ENCODE measurements at regions of chr11 and their contacts with region 1.

Region 1: DNA sequence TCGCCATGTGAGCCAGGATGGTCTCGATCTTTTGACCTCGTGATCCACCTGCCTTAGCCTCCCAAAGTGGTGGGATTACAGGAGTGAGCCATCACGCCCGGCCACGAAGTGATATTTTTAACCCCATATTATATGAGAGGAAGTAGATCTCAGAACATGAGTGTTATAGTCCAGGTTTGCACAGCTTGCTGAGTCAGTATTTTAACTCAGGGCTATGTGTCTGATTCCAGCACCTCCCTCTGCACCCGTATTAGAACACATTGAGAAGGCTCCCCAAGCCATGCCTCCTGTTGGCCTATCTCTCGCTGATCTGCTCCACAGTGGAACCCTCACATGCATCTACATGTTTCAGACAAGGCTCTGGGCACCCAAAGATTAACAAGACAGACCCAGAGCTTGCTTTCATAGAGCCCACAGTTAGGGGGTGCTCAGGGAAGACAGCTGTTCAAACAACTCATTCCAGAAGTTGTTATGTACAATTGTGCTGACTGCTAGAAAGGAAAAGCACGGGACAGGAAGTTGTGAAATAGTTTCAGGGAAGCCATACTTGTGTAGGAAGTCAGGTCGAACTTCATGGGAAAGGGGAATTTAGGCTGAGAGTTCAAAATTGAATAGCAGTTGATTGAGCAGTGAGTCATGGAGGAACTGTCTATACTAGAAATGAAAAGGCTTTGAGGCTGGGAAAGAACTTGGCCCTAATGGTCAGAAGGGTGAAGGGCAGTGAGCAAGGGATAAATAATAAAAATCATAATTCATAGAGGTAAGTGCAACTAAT is 49.3 kb upstream of the CLPB start:
- DNase-seq: no peak
- H3K4me3 ChIP-seq: no peak overlapping the region
- H3K27ac ChIP-seq: no peak overlapping the region
- H3K27me3 ChIP-seq: peaks cover 25% of the 10 kb centered on the region
- CTCF ChIP-seq: no peak

Region 2: GRCh38 chr11:72209101-72209500 is 274.5 kb before region 1 on chr11:
- CTCF ChIA-PET with region 1: interaction called, 11 read pairs
- POLR2A ChIA-PET with region 1: no interaction called
- DNase-seq: no peak
- H3K4me3 ChIP-seq: no peak overlapping the region
- H3K27ac ChIP-seq: no peak overlapping the region
- H3K27me3 ChIP-seq: peaks cover 19% of the 10 kb centered on the region
- CTCF ChIP-seq: no peak

Measured in AG04450 (cell line).